ENCODE measurements at regions of chr11 and their contacts with region 1.

Region 1: DNA sequence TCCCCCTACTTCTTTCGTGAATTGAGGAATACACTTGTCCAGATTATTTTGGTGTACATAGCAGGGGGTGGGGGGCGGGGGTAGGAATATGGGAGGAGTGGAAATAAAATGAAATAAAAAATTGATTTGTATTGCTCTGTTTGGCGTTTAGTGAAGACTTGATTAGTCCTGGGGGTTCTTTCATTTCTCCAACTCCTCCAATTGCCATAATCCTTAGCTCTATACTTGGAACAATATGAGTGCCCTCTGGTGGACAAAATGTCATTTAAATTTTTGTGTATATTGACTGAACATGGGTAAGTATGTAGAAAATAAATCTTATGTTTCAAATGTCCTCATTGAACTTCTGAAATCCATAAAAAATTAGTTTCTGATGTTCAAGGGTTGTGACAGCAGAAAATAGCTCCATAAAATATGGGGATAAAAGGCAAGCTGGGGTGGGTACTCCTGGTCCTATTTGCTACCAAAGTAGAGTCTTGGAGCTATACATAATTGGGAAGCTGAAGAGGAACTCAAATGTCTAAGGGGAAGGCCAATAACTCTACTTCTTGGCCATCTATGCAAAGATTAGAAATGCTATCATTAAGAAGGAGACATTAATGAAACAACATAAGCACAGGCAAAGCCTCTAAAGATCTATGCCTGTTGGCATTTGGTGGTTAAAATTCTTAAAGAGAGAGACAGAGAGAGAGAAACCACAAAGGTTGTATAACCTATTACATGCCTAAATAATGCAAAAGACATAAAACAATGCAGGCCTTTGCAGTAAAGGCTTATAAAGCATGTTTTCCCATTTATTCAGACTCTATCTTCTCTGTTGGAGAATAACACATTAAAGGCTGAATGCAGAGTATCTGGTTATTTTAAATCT is 421.6 kb downstream of the METTL15 start:
- DNase-seq: no peak
- ATAC-seq: no peak
- H3K4me3 ChIP-seq: no peak overlapping the region
- H3K27ac ChIP-seq: no peak overlapping the region
- H3K4me1 ChIP-seq: no peaks in the 10 kb centered on the region
- H3K27me3 ChIP-seq: no peaks in the 10 kb centered on the region
- CTCF ChIP-seq: peak in 2 of 5 experiments; percentile 23 to 36
- POLR2A ChIP-seq: no peak

Region 2: DNA sequence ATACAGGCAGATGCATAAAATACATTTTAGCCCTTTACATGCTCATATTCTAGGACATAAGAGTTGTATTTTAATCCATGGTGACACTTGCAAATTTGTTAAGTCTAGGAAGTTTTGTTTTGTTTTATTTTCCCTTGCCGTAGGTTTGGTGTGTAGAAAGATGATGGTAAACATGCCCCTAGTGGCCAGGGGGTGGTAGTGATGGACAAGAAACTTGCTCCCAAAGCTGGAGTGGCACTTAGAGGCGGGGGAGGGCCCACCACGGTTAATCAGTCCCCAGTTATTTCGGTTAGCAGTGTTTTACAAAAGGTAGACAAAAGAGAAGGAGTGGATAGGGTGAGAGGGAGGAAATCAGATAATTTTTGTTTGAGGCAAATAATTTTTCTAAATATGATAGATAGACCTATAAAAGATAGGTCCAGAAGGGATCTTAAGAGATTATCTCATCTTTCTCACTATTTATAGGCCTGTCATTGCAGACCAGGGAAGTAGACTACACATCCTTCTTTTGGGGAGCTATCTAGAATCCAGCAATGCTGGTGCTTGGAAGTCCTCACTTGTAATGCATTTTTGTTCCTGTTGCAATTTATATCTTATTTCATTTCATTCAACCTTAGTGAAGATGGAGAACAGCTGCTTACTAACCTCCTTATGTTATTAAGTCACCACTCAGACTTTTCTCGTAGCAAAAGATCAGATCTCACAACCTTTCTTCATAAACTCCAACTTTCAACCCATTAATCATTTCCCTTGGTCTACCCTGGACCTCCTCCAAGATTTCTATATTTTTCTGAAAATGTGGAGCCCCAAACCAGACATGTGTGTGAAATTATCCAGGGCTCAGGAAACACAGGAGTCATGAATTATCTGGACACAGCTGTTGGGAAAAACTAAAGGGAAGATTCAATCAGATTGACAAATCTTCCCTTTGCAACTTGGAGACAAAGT is 823.6 kb before region 1 on chr11:
- in situ Hi-C with region 1: loop called in 1 of 4 experiments (anchors 25 kb)
- intact Hi-C with region 1: no loop called
- DNase-seq: no peak
- ATAC-seq: no peak
- H3K4me3 ChIP-seq: no peak overlapping the region
- H3K27ac ChIP-seq: no peak overlapping the region
- H3K4me1 ChIP-seq: peaks cover 0 to 10% of the 10 kb centered on the region in 2 donors
- H3K27me3 ChIP-seq: peaks cover 0 to 15% (median 13%) of the 10 kb centered on the region in 3 donors
- CTCF ChIP-seq: peak in 3 of 5 experiments; percentile 18 to 55 (median 33)
- POLR2A ChIP-seq: no peak